AG04449 (cell line): ENCODE measurements at regions of chr7 and their contacts with region 1.

Region 1: GRCh38 chr7:142535123-142535779 is 214.0 kb upstream of the PRSS1 start:
- DNase-seq: no peak
- H3K4me3 ChIP-seq: no peak overlapping the region; the same call in 1 of the 2 replicates
- CTCF ChIP-seq: peak; percentile 89

Region 2: GRCh38 chr7:142496545-142497041 is 38.7 kb before region 1 on chr7:
- CTCF ChIA-PET with region 1: interaction called, 2,267 read pairs
- POLR2A ChIA-PET with region 1: no interaction called
- DNase-seq: no peak
- H3K4me3 ChIP-seq: no peak overlapping the region
- CTCF ChIP-seq: peak; percentile 73

Region 3: GRCh38 chr7:142563470-142563869 is 28.2 kb after region 1 on chr7:
- CTCF ChIA-PET with region 1: interaction called, 55 read pairs
- POLR2A ChIA-PET with region 1: no interaction called
- DNase-seq: no peak
- H3K4me3 ChIP-seq: no peak overlapping the region
- CTCF ChIP-seq: no peak

Region 4: GRCh38 chr7:142598297-142598696 is 63.0 kb after region 1 on chr7:
- CTCF ChIA-PET with region 1: interaction called, 51 read pairs
- POLR2A ChIA-PET with region 1: no interaction called
- DNase-seq: no peak
- H3K4me3 ChIP-seq: no peak overlapping the region
- CTCF ChIP-seq: no peak

Region 5: DNA sequence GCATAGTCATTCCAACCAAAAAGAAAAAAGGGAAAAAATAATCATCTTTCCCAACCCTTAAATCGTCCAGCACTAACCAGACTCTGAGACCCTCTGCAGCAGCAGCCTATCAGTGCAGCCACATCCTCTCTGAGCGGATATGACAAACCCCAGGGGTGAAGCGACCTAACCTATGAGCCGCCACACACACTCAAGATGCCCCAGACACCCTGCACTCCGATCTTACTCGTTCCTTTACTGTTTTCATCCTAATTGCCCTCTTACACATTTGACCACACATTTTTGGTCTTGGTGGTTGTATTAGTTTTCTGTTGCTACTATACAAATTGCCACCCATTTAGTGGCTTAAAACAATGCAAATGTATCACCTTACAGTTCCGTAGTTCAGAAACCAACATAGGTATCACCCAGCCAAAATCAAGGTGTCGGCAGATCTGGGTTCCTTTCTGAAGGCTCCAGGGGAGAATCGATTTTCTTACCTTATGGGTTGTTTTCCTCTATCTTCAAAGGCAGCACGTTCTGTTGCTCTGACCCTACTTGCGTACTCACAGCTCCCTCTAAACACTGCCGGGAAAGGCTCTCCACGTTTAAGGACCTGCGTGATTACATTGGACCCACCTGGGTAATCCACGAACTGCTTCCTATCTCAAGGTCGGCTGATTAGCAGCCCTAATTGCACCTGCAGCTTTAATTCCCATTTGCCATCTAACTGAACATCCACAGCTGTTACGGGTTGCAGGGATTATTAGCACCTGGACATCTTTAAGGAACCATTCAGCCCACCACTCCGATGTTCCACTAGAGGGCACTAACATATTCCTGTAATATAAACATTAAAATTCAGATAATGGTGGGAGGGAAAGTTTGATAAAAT is 176.7 kb after region 1 on chr7:
- CTCF ChIA-PET with region 1: interaction called, 11 read pairs
- POLR2A ChIA-PET with region 1: no interaction called
- DNase-seq: no peak
- H3K4me3 ChIP-seq: no peak overlapping the region
- CTCF ChIP-seq: peak; percentile 56

Region 6: GRCh38 chr7:142811154-142811737 is 276.0 kb after region 1 on chr7:
- CTCF ChIA-PET with region 1: interaction called, 58 read pairs
- POLR2A ChIA-PET with region 1: no interaction called
- DNase-seq: no peak
- H3K4me3 ChIP-seq: no peak overlapping the region
- CTCF ChIP-seq: peak; percentile 41